ENCODE measurements at regions of chr4 and their contacts with region 1.

Region 1: DNA sequence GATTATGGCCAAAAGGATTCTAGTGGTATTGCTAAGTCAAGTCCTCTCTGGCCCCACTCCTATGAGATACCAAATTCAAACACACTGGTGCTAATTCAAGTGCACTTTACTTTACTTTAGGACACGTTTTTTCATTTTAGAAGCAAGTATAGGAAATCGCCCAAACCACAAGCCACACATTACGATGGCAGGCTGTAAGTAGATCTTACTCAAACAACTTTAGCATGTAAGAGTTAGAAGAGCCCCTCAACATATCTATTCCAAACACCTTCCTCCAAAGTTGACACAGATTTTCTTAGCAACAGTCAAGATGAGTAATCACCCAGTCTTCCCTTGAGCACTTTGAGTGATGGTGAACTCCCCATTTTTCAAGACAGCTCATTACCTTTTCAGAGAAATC is 43.6 kb downstream of the DRD5 start:
- DNase-seq: peak; percentile 76
- H3K4me3 Mint-ChIP-seq: no peak overlapping the region
- H3K27ac Mint-ChIP-seq: no peak overlapping the region
- H3K4me1 Mint-ChIP-seq: peaks cover 12% of the 10 kb centered on the region
- H3K27me3 Mint-ChIP-seq: peaks cover 4% of the 10 kb centered on the region

Region 2: DNA sequence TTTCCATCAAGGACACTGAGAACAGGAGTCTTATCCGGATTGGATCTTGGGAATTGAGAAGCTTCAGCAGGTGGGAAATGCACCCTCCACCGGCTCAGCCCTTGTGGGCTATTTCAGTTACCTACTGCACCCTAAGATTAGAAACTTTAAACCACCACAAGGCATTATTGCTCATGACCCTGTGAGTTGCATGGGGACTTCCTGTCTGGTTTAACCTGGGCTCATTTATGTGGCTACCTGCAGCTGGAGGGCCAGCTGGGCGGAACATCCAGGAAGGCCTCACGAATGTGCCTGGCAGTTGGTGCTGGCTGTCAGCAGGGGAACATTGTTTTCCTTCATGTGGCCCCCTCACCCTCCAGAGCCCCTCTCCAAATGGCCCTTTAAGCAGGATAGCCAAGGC is 216.7 kb before region 1 on chr4:
- CTCF ChIA-PET with region 1: no interaction called
- intact Hi-C with region 1: loop called (anchors 10 kb)
- DNase-seq: no peak
- H3K4me3 Mint-ChIP-seq: no peak overlapping the region
- H3K27ac Mint-ChIP-seq: no peak overlapping the region
- H3K4me1 Mint-ChIP-seq: peaks cover 26% of the 10 kb centered on the region
- H3K27me3 Mint-ChIP-seq: no peaks in the 10 kb centered on the region

Region 3: GRCh38 chr4:9924750-9925149 is 99.7 kb after region 1 on chr4:
- CTCF ChIA-PET with region 1: no interaction called
- intact Hi-C with region 1: no loop called
- DNase-seq: no peak
- H3K4me3 Mint-ChIP-seq: no peak overlapping the region
- H3K27ac Mint-ChIP-seq: no peak overlapping the region
- H3K4me1 Mint-ChIP-seq: no peaks in the 10 kb centered on the region
- H3K27me3 Mint-ChIP-seq: no peaks in the 10 kb centered on the region

Region 4: DNA sequence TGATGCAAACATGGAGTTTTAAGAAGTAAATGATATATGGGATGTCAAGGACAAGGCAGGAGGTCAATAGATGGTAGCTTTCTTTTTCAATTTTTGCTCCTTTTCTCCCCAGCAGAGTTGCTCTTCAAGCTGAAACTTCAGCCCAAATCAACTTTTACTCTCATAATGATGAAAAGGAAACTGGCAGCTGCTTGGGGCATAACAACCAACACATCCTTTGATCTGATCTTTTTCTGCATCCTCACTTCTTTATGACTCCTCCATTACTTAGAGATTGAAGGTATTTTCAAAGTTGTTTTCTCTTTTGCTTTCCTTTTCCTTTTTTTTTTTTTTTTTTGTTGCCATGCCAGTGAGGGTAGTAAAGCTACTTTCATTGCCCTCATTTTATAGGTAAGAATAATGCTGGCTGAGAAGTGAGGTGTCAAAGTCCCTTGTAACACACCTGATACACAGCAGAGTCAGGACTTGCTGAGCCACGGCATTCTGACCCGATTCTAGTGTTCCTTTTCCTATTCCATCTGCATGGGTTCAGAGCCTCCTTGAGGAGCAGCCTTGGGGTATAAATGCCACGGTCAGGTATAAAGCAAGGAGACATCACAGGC is 169.3 kb after region 1 on chr4:
- CTCF ChIA-PET with region 1: no interaction called
- intact Hi-C with region 1: loop called (anchors 1 kb)
- DNase-seq: peak; percentile 29
- H3K4me3 Mint-ChIP-seq: no peak overlapping the region
- H3K27ac Mint-ChIP-seq: peak overlapping the region; percentile 80
- H3K4me1 Mint-ChIP-seq: peaks cover 21% of the 10 kb centered on the region
- H3K27me3 Mint-ChIP-seq: no peaks in the 10 kb centered on the region

Region 5: GRCh38 chr4:10006231-10006600 is 181.2 kb after region 1 on chr4:
- CTCF ChIA-PET with region 1: no interaction called
- intact Hi-C with region 1: loop called (anchors 2 kb)
- DNase-seq: no peak
- H3K4me3 Mint-ChIP-seq: no peak overlapping the region
- H3K27ac Mint-ChIP-seq: no peak overlapping the region
- H3K4me1 Mint-ChIP-seq: peaks cover 18% of the 10 kb centered on the region
- H3K27me3 Mint-ChIP-seq: no peaks in the 10 kb centered on the region

Region 6: DNA sequence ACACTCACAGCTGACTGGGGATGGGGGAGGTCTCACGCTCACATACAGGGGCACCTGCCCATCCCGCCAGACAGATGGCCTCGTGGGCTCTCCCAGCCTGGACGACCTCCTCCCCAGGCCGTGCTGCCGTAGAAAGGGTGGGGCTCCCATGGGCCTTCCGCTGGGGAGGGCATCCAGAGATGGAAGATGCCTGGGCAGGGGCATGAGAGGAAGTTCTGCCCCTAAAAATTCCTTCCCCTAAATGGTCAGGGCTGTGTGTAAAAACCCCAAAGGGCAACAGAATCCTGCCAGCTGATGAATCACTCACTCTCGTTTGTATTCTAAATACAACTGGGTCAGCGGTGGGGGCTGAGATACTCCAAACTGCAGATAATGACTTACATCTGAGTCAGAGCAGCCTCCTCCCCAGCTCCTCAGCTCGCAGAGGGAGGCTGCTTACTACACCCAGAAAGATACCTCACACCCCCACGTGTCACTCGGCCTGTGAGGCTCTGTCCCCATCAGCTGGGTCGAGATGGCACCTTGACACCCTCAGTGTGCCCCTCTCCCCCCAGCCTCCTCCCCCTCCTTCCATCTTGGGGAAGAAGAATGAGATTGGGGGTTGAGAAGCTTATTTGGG is 281.5 kb after region 1 on chr4:
- CTCF ChIA-PET with region 1: no interaction called
- intact Hi-C with region 1: loop called (anchors 5 kb)
- DNase-seq: peak; percentile 92
- H3K4me3 Mint-ChIP-seq: peak overlapping the region; percentile 52
- H3K27ac Mint-ChIP-seq: peak overlapping the region; percentile 90
- H3K4me1 Mint-ChIP-seq: peaks cover 100% of the 10 kb centered on the region
- H3K27me3 Mint-ChIP-seq: no peaks in the 10 kb centered on the region

Region 7: DNA sequence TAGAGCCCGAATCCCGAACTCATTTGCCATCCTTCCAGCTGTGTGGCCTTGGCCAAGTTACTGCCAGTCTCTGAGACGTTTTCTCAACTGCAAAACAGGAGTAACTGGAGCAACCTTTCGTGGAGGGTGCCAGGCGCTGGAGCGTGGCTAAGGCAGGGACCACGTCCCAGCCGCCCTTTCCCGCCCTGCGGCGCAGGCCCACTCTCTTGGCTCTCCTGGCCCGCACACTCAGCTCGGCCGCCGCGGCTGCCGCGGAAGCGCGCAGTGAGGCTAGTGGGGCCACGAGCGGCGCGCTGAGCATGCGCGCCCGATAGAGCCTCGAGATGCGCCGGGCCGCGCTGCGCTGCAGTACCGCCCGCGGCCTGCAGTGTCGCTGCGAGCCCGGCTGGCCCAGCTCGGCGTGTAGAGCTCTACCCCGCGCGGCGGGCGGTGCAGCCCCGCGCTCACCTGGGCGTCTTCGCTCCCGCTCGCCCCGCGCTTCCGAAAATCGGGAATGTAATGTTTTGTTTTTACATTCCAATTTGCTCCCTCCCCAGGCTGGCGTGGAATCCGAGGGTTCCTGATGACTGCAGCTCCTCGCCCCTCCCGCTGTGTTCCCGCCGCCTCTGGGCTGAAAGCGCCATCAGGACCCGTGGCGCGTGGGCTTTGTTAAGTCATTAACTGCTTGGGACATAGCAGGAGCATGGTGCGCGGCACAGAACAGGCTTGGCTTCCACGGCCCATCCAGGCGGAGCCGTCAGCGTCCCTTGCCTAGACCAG is 636.2 kb after region 1 on chr4:
- CTCF ChIA-PET with region 1: no interaction called
- intact Hi-C with region 1: loop called (anchors 10 kb)
- DNase-seq: peak; percentile 65
- H3K4me3 Mint-ChIP-seq: peak overlapping the region; percentile 76
- H3K27ac Mint-ChIP-seq: no peak overlapping the region
- H3K4me1 Mint-ChIP-seq: peaks cover 25% of the 10 kb centered on the region
- H3K27me3 Mint-ChIP-seq: peaks cover 32% of the 10 kb centered on the region

Measured in activated naive CD4-positive, alpha-beta T cell treated with anti-CD3 and anti-CD28 coated beads for 36 hours (primary cell).